ENCODE measurements at regions of chr17 and their contacts with region 1.

Region 1: DNA sequence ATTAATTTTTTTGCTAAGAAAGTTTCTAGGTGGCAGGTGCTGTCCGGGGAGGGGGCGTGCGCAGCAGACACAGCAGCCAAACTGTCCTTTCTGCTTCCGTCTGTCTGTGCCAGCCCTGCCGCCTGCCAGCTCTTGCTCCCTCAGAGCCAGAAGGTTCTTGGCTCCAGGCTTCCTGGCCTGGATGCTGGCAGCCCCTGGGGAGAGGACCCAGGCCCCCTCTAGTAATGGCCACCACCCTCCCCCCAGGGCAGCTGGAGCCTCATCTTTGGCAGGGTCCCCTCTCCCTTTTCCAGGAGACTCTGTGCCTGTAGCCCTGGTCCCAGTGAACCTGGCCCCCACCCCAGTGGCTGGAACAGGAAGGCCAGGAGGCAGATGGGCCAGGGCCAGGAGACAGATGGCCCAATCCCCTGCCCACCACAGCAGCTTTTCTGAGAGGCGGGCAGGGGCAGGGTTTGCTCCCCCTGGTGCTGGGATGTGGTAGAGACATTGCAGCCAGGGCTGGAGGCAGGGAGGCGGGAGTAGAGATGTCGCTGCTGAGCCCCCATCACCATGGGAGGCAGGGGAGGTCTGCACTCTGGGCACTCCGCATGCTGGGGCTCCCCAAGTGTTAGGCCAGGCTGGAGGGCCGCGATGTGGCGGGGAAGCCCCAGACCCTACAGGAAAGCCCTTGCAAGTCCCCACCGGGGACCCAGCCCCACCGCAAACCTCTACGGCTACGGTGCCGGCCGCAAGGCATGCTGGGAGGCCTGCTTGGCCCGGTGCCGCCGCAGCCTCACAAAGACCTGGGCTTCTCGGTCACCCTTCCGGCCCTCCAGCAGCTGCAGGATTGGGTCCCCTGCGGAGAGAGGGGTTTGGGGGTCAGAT is 16.7 kb downstream of the UNC13D start:
- H3K4me3 ChIP-seq: no peak overlapping the region
- H3K27ac ChIP-seq: peak overlapping the region; percentile 55
- H3K4me1 ChIP-seq: no peaks in the 10 kb centered on the region
- CTCF ChIP-seq: peak; percentile 88

Region 2: GRCh38 chr17:75808905-75809715 is 18.4 kb before region 1 on chr17:
- CTCF ChIA-PET with region 1: interaction called, 10 read pairs
- POLR2A ChIA-PET with region 1: interaction called, 3 read pairs
- H3K4me3 ChIP-seq: no peak overlapping the region
- H3K27ac ChIP-seq: peak overlapping the region; percentile 74
- H3K4me1 ChIP-seq: peaks cover 9% of the 10 kb centered on the region
- CTCF ChIP-seq: no peak

Region 3: GRCh38 chr17:75814900-75815373 is 12.5 kb before region 1 on chr17:
- CTCF ChIA-PET with region 1: interaction called, 23 read pairs
- POLR2A ChIA-PET with region 1: interaction called, 5 read pairs
- H3K4me3 ChIP-seq: no peak overlapping the region
- H3K27ac ChIP-seq: no peak overlapping the region
- H3K4me1 ChIP-seq: no peaks in the 10 kb centered on the region
- CTCF ChIP-seq: no peak

Region 4: DNA sequence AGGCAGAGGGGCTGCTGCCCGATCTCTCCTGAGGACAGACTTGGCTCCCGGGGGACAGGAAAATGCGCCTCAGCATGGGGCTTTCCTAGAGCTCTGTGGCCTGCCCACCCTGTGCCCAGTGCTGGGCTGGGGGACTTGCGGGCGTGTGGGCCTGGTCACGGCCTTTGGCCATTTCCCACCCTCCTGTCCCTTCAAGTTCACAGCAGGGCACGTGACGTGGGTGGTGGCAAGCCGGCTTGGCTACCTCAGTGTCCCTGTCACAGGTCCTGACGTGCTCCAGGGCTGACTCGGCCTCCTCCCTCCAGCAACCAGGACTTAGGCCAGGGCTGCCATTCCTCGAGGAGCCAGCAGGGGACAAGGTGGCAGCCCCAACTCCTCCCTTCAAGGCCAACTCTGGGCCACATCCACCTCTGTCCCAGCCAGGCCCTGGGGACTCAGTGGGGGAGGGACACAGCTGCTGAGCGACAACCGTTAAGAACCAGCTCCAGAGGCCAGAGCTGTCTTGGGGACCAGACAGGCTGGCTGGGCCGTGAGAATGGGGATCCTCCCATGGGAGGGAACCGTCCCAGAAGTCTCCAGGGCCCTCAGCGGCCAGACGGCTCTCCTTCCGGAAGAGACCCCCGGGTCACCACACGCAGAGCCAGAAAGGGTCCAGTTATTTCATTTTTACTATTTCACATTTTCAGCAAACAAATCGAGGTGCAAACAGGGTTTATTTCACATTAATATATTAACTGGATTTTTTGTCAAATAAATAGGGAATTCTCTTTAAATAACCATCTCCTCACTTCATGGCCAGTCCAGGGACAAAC is 17.8 kb after region 1 on chr17:
- CTCF ChIA-PET with region 1: interaction called, 25 read pairs
- POLR2A ChIA-PET with region 1: no interaction called
- H3K4me3 ChIP-seq: no peak overlapping the region
- H3K27ac ChIP-seq: no peak overlapping the region
- H3K4me1 ChIP-seq: no peaks in the 10 kb centered on the region; the same call in 1 of the 2 replicates
- CTCF ChIP-seq: peak; percentile 91

Measured in HEK293 (cell line).